Aorta (tissue), 5 donors: ENCODE measurements at regions of chr12 and their contacts with region 1.

Region 1: DNA sequence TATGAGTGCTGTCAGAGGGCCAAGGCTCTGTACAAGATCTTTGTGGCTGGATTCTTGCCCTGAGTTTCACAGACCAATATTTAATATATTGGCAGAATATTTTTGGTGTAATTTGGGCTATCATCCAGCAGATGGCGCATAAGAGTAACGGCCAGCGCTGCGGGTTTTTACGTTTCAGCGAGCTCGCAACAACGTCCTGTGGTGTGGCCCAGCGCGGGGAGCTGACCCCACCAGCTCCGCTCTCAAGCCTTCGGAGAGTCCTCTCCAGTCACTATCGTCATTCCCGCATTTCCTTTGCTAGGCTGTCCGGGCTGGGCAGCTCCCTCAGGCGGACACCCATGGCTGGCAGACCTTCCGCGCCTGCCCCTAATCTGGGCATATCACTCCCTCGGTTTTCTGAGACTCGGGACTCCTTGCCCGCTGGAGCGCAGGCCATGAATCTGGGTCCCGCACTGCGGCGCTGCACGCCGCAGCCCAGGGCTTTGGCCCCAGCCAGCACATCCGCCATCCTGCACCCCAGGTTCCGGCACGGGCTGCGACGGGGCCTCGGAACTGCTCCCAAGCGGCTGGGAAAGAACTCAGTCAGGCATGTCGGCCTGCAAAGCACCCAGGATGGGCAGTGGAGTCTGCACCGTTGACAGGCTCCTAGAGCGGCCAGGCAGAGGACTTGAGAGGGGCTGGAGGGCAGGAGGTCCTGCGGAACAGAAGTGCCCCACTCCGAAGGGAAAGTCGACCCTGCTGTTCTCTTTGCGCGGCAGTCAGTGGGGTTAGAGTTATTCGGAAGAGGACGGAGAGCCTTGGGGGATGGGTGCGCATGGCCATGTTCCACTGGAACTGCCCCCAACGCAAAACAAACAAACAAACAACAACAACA is 18.4 kb downstream of the OLR1 start:
- DNase-seq: peak; percentile 82 to 87
- ATAC-seq: peak; percentile 95
- H3K4me3 ChIP-seq: peak overlapping the region; percentile 5 to 47
- H3K27ac ChIP-seq: no peak overlapping the region
- H3K4me1 ChIP-seq: no peaks in the 10 kb centered on the region
- H3K27me3 ChIP-seq: no peaks in the 10 kb centered on the region

Region 2: GRCh38 chr12:10069099-10069498 is 84.4 kb before region 1 on chr12:
- intact Hi-C with region 1: no loop called
- DNase-seq: no peak
- ATAC-seq: peak; percentile 39
- H3K4me3 ChIP-seq: no peak overlapping the region
- H3K27ac ChIP-seq: no peak overlapping the region
- H3K4me1 ChIP-seq: no peaks in the 10 kb centered on the region
- H3K27me3 ChIP-seq: no peaks in the 10 kb centered on the region

Region 3: DNA sequence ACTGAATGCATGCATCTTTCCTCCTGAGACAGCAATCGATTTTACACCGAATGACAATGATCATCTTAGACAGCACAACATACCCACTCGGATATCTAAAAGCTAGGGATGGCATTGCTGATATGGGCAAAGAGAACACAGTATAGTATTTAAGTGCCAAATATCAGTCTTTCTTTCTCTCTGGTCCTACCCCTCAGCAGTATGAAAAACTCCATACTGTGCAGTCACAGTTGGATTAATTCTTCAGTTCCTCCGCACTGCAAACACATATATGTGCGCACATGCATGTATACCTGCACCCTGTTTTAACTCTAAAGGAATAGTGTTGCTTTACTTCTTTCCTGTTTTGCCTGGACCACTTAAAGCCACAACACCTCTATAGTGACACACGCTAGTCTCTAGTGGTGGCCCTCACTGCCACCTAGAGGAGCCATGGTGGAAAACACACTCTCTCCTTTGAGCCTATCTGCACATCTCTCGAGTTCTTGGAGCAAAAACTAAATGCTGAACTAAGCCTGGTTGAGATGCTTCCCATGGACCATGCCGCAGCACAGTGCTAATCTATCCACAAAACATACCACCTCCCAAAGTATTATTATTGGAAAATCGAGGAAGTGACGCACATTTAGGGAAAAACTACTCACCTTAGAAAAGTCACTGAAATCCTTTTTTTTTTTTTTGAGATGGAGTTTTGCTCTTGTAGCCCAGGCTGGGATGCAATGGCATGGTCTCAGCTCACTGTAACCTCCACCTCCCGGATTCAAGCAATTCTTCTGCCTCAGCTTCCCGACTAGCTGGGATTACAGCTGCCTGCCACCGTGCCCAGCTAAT is 37.3 kb after region 1 on chr12:
- intact Hi-C with region 1: loop called (anchors 2 to 5 kb)
- DNase-seq: peak in 1 of 2 donors; percentile 69
- ATAC-seq: peak; percentile 92
- H3K4me3 ChIP-seq: no peak overlapping the region
- H3K27ac ChIP-seq: no peak overlapping the region
- H3K4me1 ChIP-seq: no peaks in the 10 kb centered on the region
- H3K27me3 ChIP-seq: no peaks in the 10 kb centered on the region